Colonic mucosa (tissue), 4 donors: ENCODE measurements at regions of chr2 and their contacts with region 1.

Region 1: GRCh38 chr2:102615622-102616436 is 3.5 kb upstream of the SLC9A2 start:
- DNase-seq: no peak
- H3K4me3 ChIP-seq: no peak overlapping the region
- H3K27ac ChIP-seq: no peak overlapping the region
- H3K4me1 ChIP-seq: no peaks in the 10 kb centered on the region
- H3K27me3 ChIP-seq: no peaks in the 10 kb centered on the region
- CTCF ChIP-seq: peak; percentile 78

Region 2: GRCh38 chr2:101900375-101900774 is 715.5 kb before region 1 on chr2:
- intact Hi-C with region 1: no loop called
- DNase-seq: no peak
- H3K4me3 ChIP-seq: no peak overlapping the region
- H3K27ac ChIP-seq: no peak overlapping the region
- H3K4me1 ChIP-seq: no peaks in the 10 kb centered on the region
- H3K27me3 ChIP-seq: no peaks in the 10 kb centered on the region
- CTCF ChIP-seq: no peak

Region 3: DNA sequence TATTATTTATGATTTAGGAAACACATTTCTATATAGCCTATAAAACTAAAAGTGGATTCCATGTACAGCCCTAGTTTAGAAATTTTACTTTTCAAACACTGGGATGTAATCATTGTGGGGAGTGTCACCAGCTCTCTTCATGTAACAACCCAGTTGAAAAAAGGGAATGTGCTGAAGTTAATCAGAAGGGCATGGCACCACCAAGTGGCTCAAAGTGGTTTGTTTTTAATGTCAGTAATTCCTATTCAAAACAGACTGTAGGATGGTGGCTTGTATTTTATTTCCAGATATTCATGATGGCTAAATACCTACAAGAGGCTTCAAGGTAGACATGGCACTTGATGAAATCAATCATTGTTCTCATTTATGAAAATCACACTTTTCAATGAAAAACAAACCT is 87.9 kb after region 1 on chr2:
- intact Hi-C with region 1: loop called (anchors 10 kb)
- DNase-seq: no peak
- H3K4me3 ChIP-seq: no peak overlapping the region
- H3K27ac ChIP-seq: no peak overlapping the region
- H3K4me1 ChIP-seq: no peaks in the 10 kb centered on the region
- H3K27me3 ChIP-seq: no peaks in the 10 kb centered on the region
- CTCF ChIP-seq: peak; percentile 19

Region 4: GRCh38 chr2:102726128-102727087 is 110.6 kb after region 1 on chr2:
- intact Hi-C with region 1: no loop called
- DNase-seq: no peak
- H3K4me3 ChIP-seq: no peak overlapping the region
- H3K27ac ChIP-seq: no peak overlapping the region
- H3K4me1 ChIP-seq: no peaks in the 10 kb centered on the region
- H3K27me3 ChIP-seq: no peaks in the 10 kb centered on the region
- CTCF ChIP-seq: no peak

Region 5: DNA sequence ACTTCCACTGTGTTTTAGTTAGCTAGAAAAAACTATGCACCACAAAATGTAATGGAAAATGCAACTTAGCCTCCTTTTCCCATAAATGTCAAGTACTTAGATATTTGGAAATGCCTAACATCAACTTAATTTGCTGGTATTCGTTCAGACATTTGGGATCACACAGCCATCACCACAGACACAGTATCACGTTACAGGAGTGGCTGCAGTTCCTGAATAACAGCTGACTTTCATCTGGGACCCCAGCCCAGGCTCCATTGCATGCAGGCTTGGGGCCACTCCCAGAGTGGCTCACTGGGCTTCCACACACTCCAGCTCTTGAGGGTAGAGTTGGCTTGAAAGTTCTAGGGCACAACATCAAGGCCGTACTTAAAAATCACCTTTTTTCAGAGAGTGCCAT is 155.3 kb after region 1 on chr2:
- intact Hi-C with region 1: no loop called
- DNase-seq: no peak
- H3K4me3 ChIP-seq: no peak overlapping the region
- H3K27ac ChIP-seq: no peak overlapping the region
- H3K4me1 ChIP-seq: no peaks in the 10 kb centered on the region
- H3K27me3 ChIP-seq: no peaks in the 10 kb centered on the region
- CTCF ChIP-seq: no peak

Region 6: GRCh38 chr2:102826904-102827303 is 211.1 kb after region 1 on chr2:
- intact Hi-C with region 1: no loop called
- DNase-seq: no peak
- H3K4me3 ChIP-seq: no peak overlapping the region
- H3K27ac ChIP-seq: no peak overlapping the region
- H3K4me1 ChIP-seq: no peaks in the 10 kb centered on the region
- H3K27me3 ChIP-seq: no peaks in the 10 kb centered on the region
- CTCF ChIP-seq: no peak